ENCODE measurements at regions of chrX and their contacts with region 1.

Region 1: DNA sequence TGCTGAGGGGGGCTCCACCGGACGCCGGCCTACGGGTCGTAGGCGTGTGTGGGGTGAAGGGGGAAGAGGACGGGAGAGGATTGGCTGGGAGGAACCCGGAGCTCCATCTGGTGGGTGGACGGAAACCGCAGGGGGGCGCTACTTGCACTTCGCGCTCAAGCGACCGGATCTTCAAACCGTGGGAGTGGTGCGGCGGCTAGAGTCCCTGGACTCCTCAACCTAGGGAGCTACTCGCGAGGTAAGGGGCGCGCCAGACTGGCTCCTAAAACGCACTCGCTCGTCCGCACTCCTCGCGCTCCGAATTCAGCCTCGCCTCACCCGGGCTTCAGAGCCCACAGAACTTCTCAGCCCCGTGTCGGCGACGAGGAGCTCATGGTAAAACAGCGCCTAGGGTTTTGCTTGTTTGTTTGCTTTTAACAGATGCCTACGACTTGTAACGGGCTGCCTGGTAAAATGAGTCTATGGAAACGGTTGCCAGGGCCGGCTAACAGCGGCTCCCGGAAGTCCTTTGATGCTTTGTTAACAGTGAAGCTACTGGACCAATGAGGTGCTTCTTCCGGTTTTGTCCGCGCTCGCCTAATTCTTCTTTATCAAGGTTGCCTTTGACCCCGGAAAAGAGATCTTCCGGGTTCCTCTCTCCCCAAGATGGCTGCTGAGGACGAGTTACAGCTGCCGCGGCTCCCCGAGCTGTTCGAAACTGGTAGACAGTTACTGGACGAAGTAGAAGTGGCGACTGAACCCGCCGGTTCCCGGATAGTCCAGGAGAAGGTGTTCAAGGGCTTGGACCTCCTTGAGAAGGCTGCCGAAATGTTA is at the start of gene IGBP1:
- DNase-seq: peak; percentile 92
- H3K4me3 Mint-ChIP-seq: peak within 1 kb of the TSS; percentile 99
- H3K27ac Mint-ChIP-seq: peak within 1 kb of the TSS; percentile 96
- H3K4me1 Mint-ChIP-seq: peaks cover 27% of the 10 kb centered on the region
- H3K27me3 Mint-ChIP-seq: no peaks in the 10 kb centered on the region
- total RNA-seq, gene IGBP1: 29.8 and 30.5 TPM in 2 replicates

Region 2: GRCh38 chrX:68498508-68499379 is 1634.8 kb before region 1 on chrX and contains the start of gene YIPF6:
- intact Hi-C with region 1: loop called (anchors 5 kb)
- DNase-seq: peak; percentile 91
- H3K4me3 Mint-ChIP-seq: peak within 1 kb of the TSS; percentile 94
- H3K27ac Mint-ChIP-seq: peak within 1 kb of the TSS; percentile 97
- H3K4me1 Mint-ChIP-seq: peaks cover 18% of the 10 kb centered on the region
- H3K27me3 Mint-ChIP-seq: no peaks in the 10 kb centered on the region
- total RNA-seq, gene YIPF6: 21.1 and 21.8 TPM in 2 replicates

Region 3: DNA sequence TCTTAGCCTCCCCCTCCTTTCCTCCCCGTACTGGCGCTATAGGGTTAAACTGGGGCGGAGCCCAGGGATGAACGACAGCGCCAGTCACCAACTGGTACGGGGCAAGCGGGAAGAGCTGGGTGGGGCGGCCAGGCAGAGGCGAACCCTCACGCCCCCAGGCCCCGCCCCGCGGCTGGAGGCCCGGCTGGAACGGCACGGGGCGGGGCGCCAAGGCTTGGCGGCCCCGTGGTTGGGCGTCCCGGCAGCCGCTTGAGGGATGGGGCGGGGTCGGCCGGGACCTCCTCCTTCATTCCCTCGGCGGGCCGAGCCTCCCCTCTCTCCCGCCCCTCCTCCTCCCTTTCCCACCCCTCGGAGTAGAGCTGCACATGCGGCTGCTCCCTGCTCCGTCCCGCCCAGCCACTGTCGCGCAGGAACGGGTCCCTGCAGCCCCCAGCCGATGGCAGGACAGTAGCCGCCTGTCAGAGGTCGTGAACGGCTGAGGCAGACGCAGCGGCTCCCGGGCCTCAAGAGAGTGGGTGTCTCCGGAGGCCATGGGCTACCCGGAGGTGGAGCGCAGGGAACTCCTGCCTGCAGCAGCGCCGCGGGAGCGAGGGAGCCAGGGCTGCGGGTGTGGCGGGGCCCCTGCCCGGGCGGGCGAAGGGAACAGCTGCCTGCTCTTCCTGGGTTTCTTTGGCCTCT is 517.6 kb before region 1 on chrX and contains the start of gene EDA:
- intact Hi-C with region 1: loop called (anchors 2 kb)
- DNase-seq: peak; percentile 92
- H3K4me3 Mint-ChIP-seq: peak within 1 kb of the TSS; percentile 83
- H3K27ac Mint-ChIP-seq: no peak within 1 kb of the TSS
- H3K4me1 Mint-ChIP-seq: peaks cover 9% of the 10 kb centered on the region
- H3K27me3 Mint-ChIP-seq: peaks cover 12% of the 10 kb centered on the region
- total RNA-seq, gene EDA: 1.2 and 1.8 TPM in 2 replicates

Region 4: GRCh38 chrX:70166601-70167590 is 33.4 kb after region 1 on chrX:
- intact Hi-C with region 1: loop called (anchors 1 kb)
- DNase-seq: peak; percentile 54
- H3K4me3 Mint-ChIP-seq: peak overlapping the region; percentile 37
- H3K27ac Mint-ChIP-seq: peak overlapping the region; percentile 85
- H3K4me1 Mint-ChIP-seq: peaks cover 11% of the 10 kb centered on the region
- H3K27me3 Mint-ChIP-seq: peaks cover 2% of the 10 kb centered on the region

Region 5: DNA sequence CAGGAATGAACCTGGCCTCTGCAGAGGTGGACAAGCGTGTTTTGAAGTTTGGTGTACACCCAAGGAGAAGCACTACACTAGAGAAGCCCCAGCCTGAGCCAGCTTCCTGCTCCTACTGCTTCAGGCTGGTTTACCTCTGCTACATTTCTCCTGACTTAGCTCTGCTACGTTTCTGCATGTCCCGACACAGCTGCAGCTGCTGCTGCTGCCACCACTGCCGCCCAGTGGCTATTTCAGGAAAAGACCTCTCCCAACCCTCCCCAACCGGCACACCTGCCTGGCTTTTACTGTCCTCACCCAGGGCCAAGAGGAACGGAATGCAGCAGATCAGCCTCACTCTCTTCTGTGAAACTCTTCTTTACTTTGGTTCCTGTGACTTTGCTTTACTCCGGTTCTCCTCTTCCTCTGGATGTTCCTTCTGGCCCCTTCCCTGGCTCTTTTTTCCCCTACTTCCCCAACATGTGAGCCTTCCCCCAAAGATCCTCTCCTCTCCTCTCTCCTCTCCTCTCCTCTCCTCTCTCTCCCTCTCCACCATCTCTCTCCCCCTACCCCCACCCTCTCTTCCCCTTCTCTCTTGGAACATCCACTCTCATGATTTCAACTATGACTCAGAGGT is 129.6 kb after region 1 on chrX:
- intact Hi-C with region 1: loop called (anchors 10 kb)
- DNase-seq: peak; percentile 77
- H3K4me3 Mint-ChIP-seq: no peak overlapping the region
- H3K27ac Mint-ChIP-seq: no peak overlapping the region
- H3K4me1 Mint-ChIP-seq: no peaks in the 10 kb centered on the region
- H3K27me3 Mint-ChIP-seq: no peaks in the 10 kb centered on the region

Region 6: DNA sequence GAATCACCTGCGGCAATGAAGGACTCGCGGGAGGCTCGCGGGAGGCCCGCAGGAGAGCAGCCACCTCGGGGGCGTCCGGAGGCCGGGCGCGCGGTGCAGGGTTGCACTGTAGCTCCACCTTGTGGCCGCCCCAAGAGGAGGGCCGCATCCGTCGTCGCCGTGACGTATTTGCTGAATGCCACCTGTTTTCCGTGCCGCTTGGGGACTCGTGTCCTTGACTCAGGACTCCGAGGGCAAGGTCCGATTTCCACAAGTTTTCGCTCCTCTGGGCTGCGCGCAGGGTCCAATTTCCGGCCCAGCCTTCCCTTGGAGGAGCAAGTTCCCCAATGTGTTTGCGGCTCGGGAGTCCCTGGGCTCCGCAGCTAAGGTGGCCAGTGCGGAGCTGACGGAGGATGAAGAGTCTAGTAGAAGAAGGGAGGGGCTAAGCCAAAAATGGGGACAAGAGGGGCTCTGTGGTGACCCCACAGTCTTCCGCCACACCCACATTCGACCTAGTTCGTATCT is 300.4 kb after region 1 on chrX:
- intact Hi-C with region 1: loop called (anchors 1 kb)
- DNase-seq: peak; percentile 92
- H3K4me3 Mint-ChIP-seq: peak overlapping the region; percentile 93
- H3K27ac Mint-ChIP-seq: peak overlapping the region; percentile 95
- H3K4me1 Mint-ChIP-seq: peaks cover 30% of the 10 kb centered on the region
- H3K27me3 Mint-ChIP-seq: peaks cover 6% of the 10 kb centered on the region